Dorsolateral prefrontal cortex (tissue), 120 donors: ENCODE measurements at regions of chr17 and their contacts with region 1.

Region 1: GRCh38 chr17:55238179-55238930 is 26.4 kb upstream of the HLF start:
- DNase-seq: peak; percentile 91 to 96 (median 94)
- H3K4me3 ChIP-seq: peak overlapping the region; percentile 39 to 79 (median 66)
- H3K27ac ChIP-seq: peak overlapping the region in 58 of 59 donors; percentile 53 to 98 (median 90)
- H3K27me3 ChIP-seq: no peaks in the 10 kb centered on the region
- CTCF ChIP-seq: peak in 40 of 56 donors; percentile 5 to 63 (median 29)

Region 2: DNA sequence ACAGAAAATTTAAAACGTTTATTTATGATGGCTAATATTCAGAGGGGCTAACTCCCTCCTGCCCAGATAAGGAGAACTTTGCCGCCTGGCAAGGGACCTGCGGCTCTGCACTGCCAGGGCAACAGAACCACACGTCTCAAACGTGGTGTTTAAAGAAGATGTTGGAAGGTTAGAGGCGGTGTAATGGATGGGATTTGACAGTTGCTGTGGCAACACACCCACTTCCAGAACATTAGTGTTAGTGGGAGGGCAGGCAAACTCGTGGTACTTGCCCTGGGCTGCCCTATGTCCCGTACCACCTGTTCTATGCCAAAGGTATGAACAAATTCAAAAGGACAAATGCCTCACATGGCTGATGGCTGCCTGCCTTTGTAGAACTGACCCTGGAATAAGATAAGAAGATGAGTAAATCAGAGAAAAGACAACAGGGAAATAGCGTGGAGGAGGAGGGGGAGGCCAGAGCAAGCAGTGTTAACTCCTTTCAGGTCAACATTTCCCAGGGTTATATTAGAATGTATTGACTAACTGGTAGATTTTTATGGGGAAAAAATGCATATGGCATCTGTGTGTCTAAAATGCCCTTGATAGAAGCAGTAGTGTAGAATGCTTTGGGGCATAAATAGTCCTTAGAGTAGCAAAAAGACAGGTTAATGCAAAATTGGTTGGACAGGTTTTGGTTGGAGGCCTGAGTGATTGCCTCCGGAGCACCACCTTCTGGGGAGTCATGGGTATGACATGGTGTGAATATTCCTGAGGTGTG is 57.2 kb after region 1 on chr17:
- intact Hi-C with region 1: loop called in 1 of 2 experiments (anchors 5 kb)
- DNase-seq: peak in 6 of 10 donors; percentile 42 to 67 (median 54)
- H3K4me3 ChIP-seq: no peak overlapping the region
- H3K27ac ChIP-seq: peak overlapping the region in 13 of 59 donors; percentile 1 to 69 (median 35)
- H3K27me3 ChIP-seq: no peaks in the 10 kb centered on the region
- CTCF ChIP-seq: peak; percentile 74 to 93 (median 88)